ENCODE measurements at regions of chr10 and their contacts with region 1.

Region 1: DNA sequence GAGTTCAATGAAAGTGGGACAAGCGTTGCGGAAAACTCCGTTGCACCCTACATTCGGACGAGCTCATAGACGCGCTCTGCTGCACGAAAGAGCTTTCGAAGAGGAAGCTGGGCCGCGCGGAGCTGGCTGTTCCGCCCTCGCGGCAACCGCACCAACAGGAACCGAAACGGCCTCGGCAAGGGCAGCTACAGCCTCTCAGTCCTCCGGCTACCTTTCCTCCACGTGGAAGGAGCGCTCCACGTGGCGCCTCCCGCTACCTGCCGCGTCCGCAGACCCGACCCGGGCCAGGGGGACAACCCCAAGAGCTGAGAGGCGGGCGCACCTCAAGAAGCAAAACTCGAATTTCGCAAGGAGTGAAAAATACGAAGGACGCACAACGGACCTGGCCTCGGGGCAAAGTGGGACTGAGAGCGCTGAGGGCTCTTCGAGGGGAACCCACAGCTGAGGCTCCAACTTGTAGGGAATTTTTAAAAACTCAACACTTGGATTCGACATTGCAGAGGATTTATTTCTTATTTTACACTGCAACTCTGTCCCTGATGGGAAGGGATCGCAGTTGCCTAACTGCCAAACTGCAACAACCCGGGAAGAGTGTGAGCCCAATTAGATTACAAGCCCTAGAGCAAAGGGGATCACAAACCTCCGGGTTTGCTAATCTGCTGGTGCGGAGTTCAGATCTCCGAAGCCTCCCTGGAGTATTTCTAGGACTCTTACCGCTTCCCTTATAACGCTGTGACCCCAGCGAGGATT is 1.4 kb downstream of the HPSE2 start:
- DNase-seq: peak; percentile 26
- H3K4me3 ChIP-seq: peak overlapping the region in 2 of 3 experiments; percentile 22 to 39
- H3K27ac ChIP-seq: no peak overlapping the region
- H3K4me1 ChIP-seq: no peaks in the 10 kb centered on the region
- H3K27me3 ChIP-seq: peaks cover 65 to 78% of the 10 kb centered on the region in 2 experiments
- CTCF ChIP-seq: no peak
- POLR2A ChIP-seq: no peak

Region 2: DNA sequence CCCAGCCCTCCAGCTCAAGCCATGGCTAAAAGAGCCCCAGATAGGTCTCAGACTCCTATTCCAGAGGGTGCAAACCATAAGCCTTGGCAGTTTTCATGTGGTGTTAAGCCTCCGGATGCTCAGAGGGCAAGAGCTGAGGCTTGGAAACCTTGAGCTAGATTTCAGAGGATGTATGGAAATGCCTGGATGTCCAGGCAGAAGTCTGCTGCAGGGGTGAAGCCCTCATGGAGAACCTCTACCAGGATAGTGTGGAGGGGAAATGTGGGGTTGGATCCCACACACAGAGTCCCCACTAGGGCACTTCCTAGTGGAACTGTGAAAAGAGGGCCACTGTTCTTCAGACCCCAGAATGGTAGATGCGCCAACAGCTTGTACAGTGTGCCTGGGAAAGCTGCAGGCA is 14.6 kb after region 1 on chr10:
- CTCF ChIA-PET with region 1: interaction called, 15 read pairs
- POLR2A ChIA-PET with region 1: no interaction called
- dilution Hi-C with region 1: no loop called
- intact Hi-C with region 1: no loop called
- DNase-seq: no peak
- H3K4me3 ChIP-seq: no peak overlapping the region
- H3K27ac ChIP-seq: no peak overlapping the region
- H3K4me1 ChIP-seq: no peaks in the 10 kb centered on the region
- H3K27me3 ChIP-seq: no peaks in the 10 kb centered on the region
- CTCF ChIP-seq: no peak
- POLR2A ChIP-seq: no peak